Activated CD4-positive, alpha-beta T cell treated with anti-CD3 and anti-CD28 coated beads, Interleukin-2, amount 10 ng/mL, durations not matched to agents 24 days and 14 days (primary cell): ENCODE measurements at regions of chr5 and their contacts with region 1.

Region 1: GRCh38 chr5:150449517-150450339 is at the start of gene RPS14:
- DNase-seq: peak; percentile 98
- H3K4me3 Mint-ChIP-seq: peak within 1 kb of the TSS; percentile 93
- H3K27ac Mint-ChIP-seq: peak within 1 kb of the TSS; percentile 97
- H3K4me1 Mint-ChIP-seq: peaks cover 24% of the 10 kb centered on the region
- H3K27me3 Mint-ChIP-seq: no peaks in the 10 kb centered on the region
- total RNA-seq, gene RPS14: 2,567 and 2,587 TPM in 2 replicates

Region 2: GRCh38 chr5:150000256-150000989 is 449.3 kb before region 1 on chr5 and contains the starts of genes HMGXB3 and TIGD6:
- intact Hi-C with region 1: loop called (anchors 10 kb)
- DNase-seq: peak; percentile 96
- H3K4me3 Mint-ChIP-seq: peak within 1 kb of the TSS; percentile 86
- H3K27ac Mint-ChIP-seq: peak within 1 kb of the TSS; percentile 97
- H3K4me1 Mint-ChIP-seq: peaks cover 41% of the 10 kb centered on the region
- H3K27me3 Mint-ChIP-seq: no peaks in the 10 kb centered on the region
- total RNA-seq, gene HMGXB3: 43.1 and 47.8 TPM in 2 replicates
- total RNA-seq, gene TIGD6: 2.5 TPM in 2 replicates

Region 3: GRCh38 chr5:150801117-150801927 is 351.6 kb after region 1 on chr5:
- intact Hi-C with region 1: no loop called
- DNase-seq: peak; percentile 77
- H3K4me3 Mint-ChIP-seq: no peak overlapping the region
- H3K27ac Mint-ChIP-seq: peak overlapping the region; percentile 68
- H3K4me1 Mint-ChIP-seq: peaks cover 17% of the 10 kb centered on the region
- H3K27me3 Mint-ChIP-seq: peaks cover 8% of the 10 kb centered on the region

Region 4: GRCh38 chr5:151150471-151151262 is 700.9 kb after region 1 on chr5:
- intact Hi-C with region 1: loop called (anchors 5 kb)
- DNase-seq: peak; percentile 93
- H3K4me3 Mint-ChIP-seq: peak overlapping the region; percentile 66
- H3K27ac Mint-ChIP-seq: peak overlapping the region; percentile 88
- H3K4me1 Mint-ChIP-seq: peaks cover 81% of the 10 kb centered on the region
- H3K27me3 Mint-ChIP-seq: no peaks in the 10 kb centered on the region